ENCODE measurements at regions of chr22 and their contacts with region 1.

Region 1: GRCh38 chr22:44988671-44989070 is 21.1 kb downstream of the PHF21B start:
- DNase-seq: peak in 1 of 2 experiments; percentile 34
- H3K4me3 ChIP-seq: no peak overlapping the region
- H3K4me3 Mint-ChIP-seq: no peak overlapping the region
- H3K27ac Mint-ChIP-seq: no peak overlapping the region
- H3K4me1 ChIP-seq: no peaks in the 10 kb centered on the region
- H3K4me1 Mint-ChIP-seq: no peaks in the 10 kb centered on the region
- H3K27me3 ChIP-seq: peaks cover 1% of the 10 kb centered on the region
- H3K27me3 Mint-ChIP-seq: peaks cover 11% of the 10 kb centered on the region
- CTCF ChIP-seq: peak; percentile 9 to 51

Region 2: DNA sequence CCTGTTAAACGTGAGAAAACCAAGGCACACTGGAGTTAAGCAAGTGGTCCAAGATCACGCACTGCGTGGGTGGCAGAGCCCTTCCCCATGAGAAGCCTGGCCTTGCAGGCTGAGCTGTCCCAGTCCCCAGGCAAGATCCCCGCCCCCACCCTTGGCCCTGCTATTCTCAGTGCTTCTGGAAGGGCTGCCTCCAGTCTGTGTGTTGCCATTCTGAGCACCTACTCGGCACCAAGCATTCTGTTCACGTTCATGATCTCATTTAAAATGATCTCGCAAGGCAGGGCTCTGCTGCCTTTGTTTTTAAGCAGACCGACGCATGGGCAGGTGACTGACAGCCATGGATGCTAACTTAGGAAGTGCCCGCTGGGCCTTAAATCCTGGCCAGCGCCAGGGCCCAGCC is 41.6 kb before region 1 on chr22:
- CTCF ChIA-PET with region 1: no interaction called
- POLR2A ChIA-PET with region 1: no interaction called
- intact Hi-C with region 1: no loop called
- DNase-seq: no peak
- H3K4me3 ChIP-seq: no peak overlapping the region
- H3K4me3 Mint-ChIP-seq: no peak overlapping the region
- H3K27ac Mint-ChIP-seq: no peak overlapping the region
- H3K4me1 ChIP-seq: no peaks in the 10 kb centered on the region
- H3K4me1 Mint-ChIP-seq: no peaks in the 10 kb centered on the region
- H3K27me3 ChIP-seq: peaks cover 1% of the 10 kb centered on the region; the same call in 1 of the 2 replicates
- H3K27me3 Mint-ChIP-seq: peaks cover 15% of the 10 kb centered on the region
- CTCF ChIP-seq: no peak

Region 3: DNA sequence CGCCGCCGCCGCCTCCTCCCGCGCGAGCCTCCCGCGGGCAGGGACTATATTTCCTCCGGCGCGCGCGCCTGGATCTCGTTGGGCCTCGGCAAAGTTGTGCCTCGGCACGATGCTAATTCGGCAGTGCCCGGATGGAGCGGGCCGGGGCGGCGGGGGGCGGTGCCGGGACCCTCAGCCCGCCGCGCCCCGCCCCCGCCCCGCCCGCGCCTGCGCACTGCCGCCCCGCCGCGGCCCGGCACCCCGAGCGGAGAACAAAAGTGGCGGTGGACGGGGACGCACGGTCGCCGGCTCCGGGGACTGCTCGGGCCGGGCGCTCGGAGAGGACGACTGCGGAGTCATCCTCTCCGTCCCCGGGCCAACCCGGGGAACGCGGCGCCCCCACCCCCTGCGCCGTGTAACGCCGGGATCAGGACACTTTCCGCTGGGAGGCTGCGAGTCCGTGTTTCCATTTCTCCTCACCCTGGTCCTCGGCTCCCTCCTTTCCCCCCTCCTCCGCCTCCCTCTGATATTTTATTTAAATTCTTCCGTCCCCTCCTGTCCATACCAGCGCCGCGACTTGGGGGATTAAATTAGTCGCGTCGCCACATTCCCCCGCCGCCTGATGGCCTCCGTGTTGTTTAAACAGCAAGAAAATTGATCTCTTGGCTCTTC is 21.3 kb after region 1 on chr22 and contains the start of gene PHF21B:
- CTCF ChIA-PET with region 1: interaction called, 10 read pairs
- POLR2A ChIA-PET with region 1: no interaction called
- intact Hi-C with region 1: no loop called
- DNase-seq: peak in 1 of 2 experiments; percentile 60
- H3K4me3 ChIP-seq: peak within 1 kb of the TSS; percentile 53
- H3K4me3 Mint-ChIP-seq: peak within 1 kb of the TSS; percentile 76
- H3K27ac Mint-ChIP-seq: no peak within 1 kb of the TSS
- H3K4me1 ChIP-seq: peaks cover 4% of the 10 kb centered on the region
- H3K4me1 Mint-ChIP-seq: peaks cover 8% of the 10 kb centered on the region
- H3K27me3 ChIP-seq: peaks cover 1% of the 10 kb centered on the region; the same call in 1 of the 2 replicates
- H3K27me3 Mint-ChIP-seq: peaks cover 37% of the 10 kb centered on the region
- CTCF ChIP-seq: no peak
- total RNA-seq, gene PHF21B: 0.98 TPM in 1 of 2 replicates, not detected in the other

Region 4: GRCh38 chr22:45082795-45083194 is 94.1 kb after region 1 on chr22:
- CTCF ChIA-PET with region 1: no interaction called
- POLR2A ChIA-PET with region 1: no interaction called
- intact Hi-C with region 1: loop called (anchors 5 kb)
- DNase-seq: peak in 1 of 2 experiments; percentile 20
- H3K4me3 ChIP-seq: no peak overlapping the region
- H3K4me3 Mint-ChIP-seq: no peak overlapping the region
- H3K27ac Mint-ChIP-seq: no peak overlapping the region
- H3K4me1 ChIP-seq: no peaks in the 10 kb centered on the region
- H3K4me1 Mint-ChIP-seq: peaks cover 13% of the 10 kb centered on the region
- H3K27me3 ChIP-seq: no peaks in the 10 kb centered on the region
- H3K27me3 Mint-ChIP-seq: peaks cover 10% of the 10 kb centered on the region
- CTCF ChIP-seq: peak; percentile 4 to 21

Measured in Caco-2 (cell line).